Caki2 (cell line): ENCODE measurements at regions of chr15 and their contacts with region 1.

Region 1: GRCh38 chr15:66848751-66849745 is 147.0 kb downstream of the SMAD6 start:
- DNase-seq: no peak

Region 2: DNA sequence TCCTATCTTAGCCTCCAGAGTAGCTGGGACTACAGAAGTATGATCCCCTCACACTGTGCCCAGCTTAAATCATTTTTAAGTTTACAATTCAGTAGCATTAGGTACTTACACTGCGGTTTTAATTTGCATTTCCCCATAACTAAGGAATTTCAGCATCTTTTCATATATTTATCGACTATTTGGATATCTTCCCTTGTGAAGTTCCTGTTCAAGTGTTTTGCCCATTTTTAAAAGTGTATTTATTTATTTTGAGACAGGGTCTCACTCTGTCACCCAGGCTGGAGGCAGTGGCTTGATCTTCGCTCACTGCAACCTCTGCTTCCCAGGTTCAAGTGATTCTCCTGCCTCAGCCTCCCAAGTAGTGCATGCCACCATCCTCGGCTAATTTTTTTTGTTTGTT is 474.9 kb before region 1 on chr15:
- in situ Hi-C with region 1: no loop called
- DNase-seq: no peak

Region 3: DNA sequence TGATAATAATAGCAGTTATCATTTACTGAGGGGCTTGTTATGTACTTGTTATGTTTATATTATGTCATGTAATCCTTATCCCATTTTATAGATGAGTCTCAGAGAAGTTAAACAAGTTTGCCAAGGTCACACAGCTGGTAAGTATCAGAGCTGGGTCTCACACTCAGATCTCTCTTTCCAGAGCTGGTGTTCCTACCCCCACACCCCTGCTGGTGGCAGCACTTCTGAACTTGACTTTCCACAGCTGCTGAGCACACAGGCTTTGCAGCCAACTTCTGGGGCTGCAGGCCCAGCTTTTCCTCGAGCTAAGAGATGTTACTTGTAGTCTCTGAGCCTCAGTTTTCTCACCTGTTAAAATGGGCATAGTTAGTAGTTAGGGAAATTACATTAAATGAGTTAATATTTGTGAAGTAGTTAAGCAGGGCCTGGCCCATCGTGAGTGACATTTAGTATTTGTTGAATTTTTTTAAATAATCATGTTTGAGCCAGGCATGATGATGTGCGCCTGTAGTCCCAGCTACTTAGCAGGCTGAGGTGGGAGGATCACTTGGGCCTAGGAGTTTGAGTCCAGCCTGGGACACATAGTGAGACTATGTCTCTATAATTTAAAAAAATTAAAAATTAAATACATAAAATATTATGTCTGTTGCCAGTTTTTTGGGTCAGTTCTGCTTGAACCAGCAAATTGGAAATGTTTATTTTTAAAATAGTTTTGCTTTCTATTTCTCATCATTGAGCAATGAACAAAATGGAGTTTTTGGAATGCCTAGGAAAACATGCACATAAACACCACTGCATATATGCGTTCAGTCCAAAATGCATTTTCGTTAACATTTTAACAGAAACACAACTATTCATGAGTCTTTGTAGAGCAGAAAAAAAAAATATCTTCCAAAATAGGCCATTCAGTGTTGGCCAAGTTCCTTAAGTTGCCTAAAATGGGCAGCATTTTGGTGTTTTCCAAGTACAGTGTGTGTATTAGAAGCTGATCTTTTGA is 59.7 kb before region 1 on chr15:
- in situ Hi-C with region 1: loop called (anchors 5 kb)
- DNase-seq: no peak